A673 (cell line): ENCODE measurements at regions of chr14 and their contacts with region 1.

Region 1: GRCh38 chr14:21498553-21499526 is 12.3 kb downstream of the METTL3 start:
- DNase-seq: peak; percentile 85
- H3K4me3 ChIP-seq: no peak overlapping the region
- H3K27ac ChIP-seq: no peak overlapping the region
- H3K4me1 ChIP-seq: no peaks in the 10 kb centered on the region
- H3K27me3 ChIP-seq: no peaks in the 10 kb centered on the region
- CTCF ChIP-seq: peak; percentile 74

Region 2: DNA sequence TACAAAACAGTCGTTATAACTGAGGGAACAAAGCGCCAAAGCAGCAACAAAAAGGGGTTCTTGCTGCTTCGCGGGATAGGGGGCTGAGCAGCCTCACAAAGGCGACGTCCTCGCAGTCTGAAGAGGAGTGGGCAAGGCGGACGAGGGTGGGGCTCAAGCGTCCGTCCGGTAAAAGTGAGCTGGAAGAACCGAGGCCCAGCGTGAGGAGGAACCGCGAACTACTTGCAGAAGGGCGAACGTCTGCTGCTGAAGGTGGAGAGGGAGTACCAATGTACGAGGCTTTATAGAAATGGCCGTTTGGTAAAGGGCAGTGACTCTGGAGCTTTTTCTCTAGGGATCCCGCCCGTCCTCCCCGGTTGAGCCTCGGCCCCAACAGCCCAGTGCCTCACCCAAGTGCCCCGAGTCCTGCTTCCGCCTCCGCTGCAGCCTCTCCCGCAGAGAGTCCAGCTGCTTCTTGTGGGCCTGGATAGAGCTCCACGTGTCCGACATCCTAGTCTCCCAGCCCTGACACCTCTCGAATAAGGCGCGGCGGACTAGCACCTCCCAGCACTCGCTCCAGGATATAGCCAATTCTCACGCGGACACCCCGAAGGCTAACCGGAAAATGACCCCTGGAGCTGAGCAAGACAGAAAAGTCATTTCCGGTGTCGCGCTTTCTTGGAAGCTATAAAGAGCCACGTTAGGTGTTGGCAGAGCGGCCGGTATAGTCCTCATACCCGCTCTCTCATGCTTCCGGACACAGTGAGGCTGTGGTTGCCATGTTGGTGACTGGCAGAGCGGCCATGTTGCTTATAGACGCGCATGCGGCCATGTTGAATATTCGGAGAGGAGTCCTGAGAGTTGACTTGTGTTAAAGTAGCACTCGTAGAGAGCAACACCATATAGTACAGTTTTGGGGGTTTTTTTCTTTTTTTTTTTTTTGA is 12.2 kb after region 1 on chr14 and contains the start of gene METTL3:
- CTCF ChIA-PET with region 1: interaction called, 4 read pairs
- POLR2A ChIA-PET with region 1: interaction called, 10 read pairs
- intact Hi-C with region 1: no loop called
- DNase-seq: peak; percentile 99
- H3K4me3 ChIP-seq: peak within 1 kb of the TSS; percentile 88
- H3K27ac ChIP-seq: peak within 1 kb of the TSS; percentile 85
- H3K4me1 ChIP-seq: peaks cover 4% of the 10 kb centered on the region
- H3K27me3 ChIP-seq: no peaks in the 10 kb centered on the region
- CTCF ChIP-seq: no peak
- total RNA-seq, gene METTL3: 93.0 and 96.3 TPM in 2 replicates

Region 3: DNA sequence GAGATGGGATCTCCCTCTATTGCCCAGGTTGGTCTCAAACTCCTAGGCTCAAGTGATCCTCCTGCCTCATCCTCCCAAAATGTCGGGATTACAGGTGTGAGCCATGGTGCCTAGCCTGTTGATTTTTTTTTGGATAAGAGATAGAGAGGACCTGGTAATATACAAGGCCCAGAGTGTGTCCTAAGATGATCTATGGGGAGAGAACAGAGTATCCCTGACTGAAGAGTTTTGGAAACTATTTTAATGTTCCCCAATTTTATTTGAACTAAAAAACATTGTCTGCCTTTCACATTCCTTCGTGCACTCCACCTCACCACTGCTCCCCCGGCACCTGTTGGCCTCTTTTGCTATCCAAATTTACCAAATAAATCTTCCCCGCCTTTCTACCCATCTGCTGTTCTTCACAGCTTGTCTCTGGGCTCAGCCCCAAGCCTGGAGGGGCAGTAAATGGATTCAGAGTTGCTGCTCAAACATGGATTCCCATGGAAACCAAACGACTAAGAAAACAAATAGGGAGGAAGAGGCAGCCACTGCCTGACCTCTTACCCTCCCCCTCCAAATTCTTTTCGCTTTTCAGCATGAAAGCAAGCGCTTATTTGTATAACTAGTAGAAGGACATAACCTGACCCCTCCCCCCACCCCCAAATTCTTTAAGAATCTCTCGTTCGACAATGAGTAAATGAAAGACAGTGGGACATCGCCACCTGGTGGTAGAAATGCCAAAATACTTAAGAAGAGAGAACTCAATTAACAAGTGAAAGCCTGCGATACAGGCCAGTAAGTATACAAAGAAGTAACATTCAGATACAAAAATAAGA is 58.5 kb after region 1 on chr14:
- CTCF ChIA-PET with region 1: interaction called, 34 read pairs
- POLR2A ChIA-PET with region 1: no interaction called
- intact Hi-C with region 1: loop called (anchors 1 kb)
- DNase-seq: peak; percentile 94
- H3K4me3 ChIP-seq: peak overlapping the region; percentile 39
- H3K27ac ChIP-seq: peak overlapping the region; percentile 17
- H3K4me1 ChIP-seq: peaks cover 6% of the 10 kb centered on the region
- H3K27me3 ChIP-seq: no peaks in the 10 kb centered on the region
- CTCF ChIP-seq: peak; percentile 79